CD8-positive, alpha-beta T cell (primary cell): ENCODE measurements at regions of chr7 and their contacts with region 1.

Region 1: DNA sequence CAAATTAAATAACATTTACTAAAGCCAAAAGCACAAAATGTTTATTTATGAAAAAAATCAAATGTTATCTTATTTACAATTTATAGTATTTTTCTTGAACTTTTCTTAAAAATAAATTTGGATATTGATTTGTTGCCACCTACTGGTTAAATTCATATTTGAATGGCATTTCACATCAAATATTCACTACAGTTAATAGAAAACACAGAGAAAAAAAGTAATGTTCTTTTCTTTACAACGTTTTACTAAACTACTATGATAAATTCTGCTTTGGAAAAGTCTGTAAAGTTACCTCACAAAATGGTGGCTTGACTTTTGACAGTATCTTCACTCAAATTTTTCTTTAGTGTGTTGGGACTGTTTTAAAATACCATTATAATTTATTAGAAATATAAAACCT is 52.7 kb downstream of the SRPK2 start:
- DNase-seq: peak in 1 of 9 experiments; percentile 34
- ATAC-seq: no peak
- H3K4me3 ChIP-seq: no peak overlapping the region
- H3K4me3 Mint-ChIP-seq: no peak overlapping the region
- H3K27ac ChIP-seq: no peak overlapping the region
- H3K27ac Mint-ChIP-seq: no peak overlapping the region
- H3K4me1 ChIP-seq: no peaks in the 10 kb centered on the region
- H3K4me1 Mint-ChIP-seq: peaks cover 26% of the 10 kb centered on the region
- H3K27me3 ChIP-seq: no peaks in the 10 kb centered on the region
- H3K27me3 Mint-ChIP-seq: no peaks in the 10 kb centered on the region
- CTCF ChIP-seq: peak; percentile 84

Region 2: GRCh38 chr7:105060437-105060836 is 275.6 kb before region 1 on chr7:
- CTCF ChIA-PET with region 1: no interaction called
- POLR2A ChIA-PET with region 1: no interaction called
- intact Hi-C with region 1: loop called in 1 of 2 experiments (anchors 1 kb)
- DNase-seq: no peak
- ATAC-seq: no peak
- H3K4me3 ChIP-seq: no peak overlapping the region
- H3K4me3 Mint-ChIP-seq: no peak overlapping the region
- H3K27ac ChIP-seq: no peak overlapping the region
- H3K27ac Mint-ChIP-seq: peak overlapping the region; percentile 58
- H3K4me1 ChIP-seq: peaks cover 40% of the 10 kb centered on the region
- H3K4me1 Mint-ChIP-seq: peaks cover 75% of the 10 kb centered on the region
- H3K27me3 ChIP-seq: no peaks in the 10 kb centered on the region
- H3K27me3 Mint-ChIP-seq: no peaks in the 10 kb centered on the region
- CTCF ChIP-seq: no peak

Region 3: DNA sequence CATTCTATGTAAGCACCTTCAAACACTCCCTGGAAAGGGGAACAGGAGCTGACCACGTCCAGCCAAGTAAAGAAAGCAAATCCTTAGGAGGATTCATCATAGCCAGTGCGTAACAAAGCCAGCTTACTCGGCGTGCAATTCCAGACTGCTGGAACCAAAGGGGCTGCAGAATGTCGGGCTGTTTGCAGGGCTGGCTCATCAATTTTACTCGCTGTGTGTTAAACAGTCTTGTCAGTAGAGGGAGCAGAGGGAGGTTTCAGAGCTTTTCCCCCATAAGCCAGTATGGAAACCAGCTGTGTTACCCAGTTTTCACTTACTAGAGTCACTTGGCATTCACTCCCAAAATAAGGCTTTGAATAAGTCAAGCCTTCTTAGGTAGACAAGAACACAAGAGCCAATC is 194.9 kb before region 1 on chr7:
- CTCF ChIA-PET with region 1: no interaction called
- POLR2A ChIA-PET with region 1: no interaction called
- intact Hi-C with region 1: loop called in 1 of 2 experiments (anchors 5 kb)
- DNase-seq: peak in 2 of 9 experiments; percentile 13 to 23
- ATAC-seq: no peak
- H3K4me3 ChIP-seq: no peak overlapping the region
- H3K4me3 Mint-ChIP-seq: no peak overlapping the region
- H3K27ac ChIP-seq: no peak overlapping the region
- H3K27ac Mint-ChIP-seq: no peak overlapping the region
- H3K4me1 ChIP-seq: no peaks in the 10 kb centered on the region
- H3K4me1 Mint-ChIP-seq: peaks cover 12% of the 10 kb centered on the region
- H3K27me3 ChIP-seq: no peaks in the 10 kb centered on the region
- H3K27me3 Mint-ChIP-seq: no peaks in the 10 kb centered on the region
- CTCF ChIP-seq: no peak

Region 4: DNA sequence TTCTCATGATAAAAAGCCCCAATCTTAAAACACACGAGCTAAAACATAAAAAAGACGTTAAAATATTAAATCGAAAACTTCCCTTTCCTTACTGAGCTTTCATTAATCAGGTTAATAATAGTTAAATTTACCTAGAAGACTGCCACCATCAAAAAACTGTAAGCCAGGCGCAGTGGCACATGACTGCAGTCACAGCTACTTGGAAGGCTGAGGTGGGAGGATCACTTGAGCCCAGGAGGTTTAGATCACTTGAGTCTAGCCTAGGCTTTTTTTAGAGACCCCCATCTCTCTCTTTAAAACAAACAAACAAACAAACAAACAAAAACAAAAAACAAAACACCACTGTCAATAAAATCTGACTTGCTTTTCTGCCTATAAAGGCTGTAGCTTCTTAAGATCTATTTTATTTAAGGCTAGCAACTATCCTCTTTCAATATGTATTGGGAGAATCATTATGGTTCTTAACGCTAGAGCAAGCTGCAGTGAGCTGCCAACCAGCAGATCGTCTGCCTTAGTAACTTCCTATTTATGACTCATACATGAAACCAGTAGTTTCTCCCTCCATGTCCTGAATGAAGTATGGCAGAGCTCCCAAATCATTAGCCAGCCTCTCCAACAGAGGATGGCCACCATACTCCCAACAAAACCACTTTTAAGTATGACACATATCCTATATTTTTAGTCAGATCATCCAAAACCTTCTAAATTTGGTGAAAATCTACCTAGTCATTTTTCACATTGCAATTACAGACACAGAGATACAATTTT is 110.9 kb before region 1 on chr7:
- CTCF ChIA-PET with region 1: interaction called, 3 read pairs
- POLR2A ChIA-PET with region 1: no interaction called
- intact Hi-C with region 1: loop called in 1 of 2 experiments (anchors 5 kb)
- DNase-seq: peak in 2 of 9 experiments; percentile 15 to 32
- ATAC-seq: peak; percentile 46
- H3K4me3 ChIP-seq: no peak overlapping the region
- H3K4me3 Mint-ChIP-seq: no peak overlapping the region
- H3K27ac ChIP-seq: no peak overlapping the region
- H3K27ac Mint-ChIP-seq: no peak overlapping the region
- H3K4me1 ChIP-seq: peaks cover 8% of the 10 kb centered on the region
- H3K4me1 Mint-ChIP-seq: peaks cover 34% of the 10 kb centered on the region
- H3K27me3 ChIP-seq: no peaks in the 10 kb centered on the region
- H3K27me3 Mint-ChIP-seq: no peaks in the 10 kb centered on the region
- CTCF ChIP-seq: no peak

Region 5: DNA sequence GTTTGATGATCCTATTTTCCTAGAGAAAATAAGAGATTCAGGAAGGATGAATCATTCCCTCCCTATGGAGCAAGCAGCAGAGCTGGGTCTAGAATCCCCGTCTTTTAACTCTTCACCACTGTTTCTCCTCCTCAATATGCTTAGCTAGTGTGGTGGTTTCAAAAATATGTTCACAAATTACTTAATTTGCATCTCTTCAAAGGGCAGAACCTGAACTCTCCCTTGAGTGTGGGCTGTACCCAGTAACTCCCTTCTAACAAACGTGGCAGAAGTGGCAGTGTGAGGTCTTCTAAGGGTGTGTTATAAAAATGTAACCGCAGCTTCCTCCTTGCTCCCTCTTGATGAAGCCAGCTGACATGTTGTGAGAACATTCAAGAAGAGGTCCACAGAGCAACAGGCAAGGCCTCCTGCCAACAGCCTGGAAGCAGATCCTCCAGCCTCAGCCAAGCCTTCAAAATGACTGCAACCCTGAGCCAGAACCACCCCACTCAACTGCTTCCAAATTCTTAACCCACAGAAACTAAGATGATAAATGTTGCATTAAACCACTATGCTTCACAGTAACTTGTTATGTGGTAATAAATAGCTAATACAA is 16.1 kb after region 1 on chr7:
- CTCF ChIA-PET with region 1: interaction called, 6 read pairs
- POLR2A ChIA-PET with region 1: no interaction called
- intact Hi-C with region 1: loop called in 1 of 2 experiments (anchors 2 kb)
- DNase-seq: peak; percentile 27 to 91 (median 56)
- ATAC-seq: peak; percentile 94
- H3K4me3 ChIP-seq: peak overlapping the region in 1 of 2 experiments; percentile 16
- H3K4me3 Mint-ChIP-seq: peak overlapping the region; percentile 63
- H3K27ac ChIP-seq: peak overlapping the region in 1 of 2 experiments; percentile 68
- H3K27ac Mint-ChIP-seq: peak overlapping the region; percentile 89
- H3K4me1 ChIP-seq: peaks cover 59% of the 10 kb centered on the region
- H3K4me1 Mint-ChIP-seq: peaks cover 66% of the 10 kb centered on the region
- H3K27me3 ChIP-seq: no peaks in the 10 kb centered on the region
- H3K27me3 Mint-ChIP-seq: no peaks in the 10 kb centered on the region
- CTCF ChIP-seq: no peak

Region 6: DNA sequence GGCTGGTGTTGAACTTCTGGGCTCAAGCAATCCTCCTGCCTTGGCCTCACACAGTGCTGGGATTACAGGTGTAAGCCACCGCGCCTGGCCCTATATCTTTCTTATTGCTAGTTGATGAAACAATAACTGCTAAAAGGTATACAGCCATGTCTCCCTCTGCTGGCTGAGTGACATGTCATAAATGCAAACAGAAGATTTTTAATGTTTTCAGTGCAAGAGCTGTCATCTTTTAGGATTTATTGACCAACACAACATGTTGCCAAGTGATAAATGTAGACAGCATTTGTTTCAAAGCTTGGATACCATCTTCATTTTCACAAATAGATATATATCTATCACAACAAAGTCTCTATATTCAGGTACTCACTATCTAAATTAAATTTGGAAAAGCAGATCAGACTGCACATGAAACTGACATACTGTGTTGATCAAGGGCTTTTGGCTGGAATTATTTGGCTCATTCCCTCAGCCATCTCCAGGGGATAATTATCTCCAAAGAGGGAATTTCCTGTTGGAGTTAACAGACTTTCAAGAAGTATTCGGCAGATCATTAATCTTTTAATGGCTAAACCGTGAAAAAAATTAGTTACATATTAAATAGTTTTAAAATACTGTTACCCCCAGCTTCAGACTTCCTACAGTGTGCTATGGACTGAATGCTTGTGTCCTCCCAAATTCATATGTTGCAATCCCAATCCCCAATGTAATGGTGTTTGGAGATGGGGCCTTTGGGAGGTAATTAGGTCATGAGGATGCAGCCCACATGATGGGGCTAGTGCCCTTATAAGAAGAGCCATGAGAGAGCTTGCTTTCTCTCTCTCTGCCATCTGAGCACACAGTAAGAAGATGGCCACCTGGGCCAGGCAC is 94.0 kb after region 1 on chr7:
- CTCF ChIA-PET with region 1: interaction called, 3 read pairs
- POLR2A ChIA-PET with region 1: no interaction called
- intact Hi-C with region 1: loop called in 1 of 2 experiments (anchors 2 kb)
- DNase-seq: peak; percentile 12 to 75 (median 53)
- ATAC-seq: peak; percentile 61
- H3K4me3 ChIP-seq: no peak overlapping the region
- H3K4me3 Mint-ChIP-seq: no peak overlapping the region
- H3K27ac ChIP-seq: no peak overlapping the region
- H3K27ac Mint-ChIP-seq: no peak overlapping the region
- H3K4me1 ChIP-seq: no peaks in the 10 kb centered on the region
- H3K4me1 Mint-ChIP-seq: no peaks in the 10 kb centered on the region
- H3K27me3 ChIP-seq: no peaks in the 10 kb centered on the region
- H3K27me3 Mint-ChIP-seq: no peaks in the 10 kb centered on the region
- CTCF ChIP-seq: peak; percentile 45

Region 7: GRCh38 chr7:105538339-105538738 is 202.3 kb after region 1 on chr7:
- CTCF ChIA-PET with region 1: no interaction called
- POLR2A ChIA-PET with region 1: no interaction called
- intact Hi-C with region 1: no loop called
- DNase-seq: no peak
- ATAC-seq: no peak
- H3K4me3 ChIP-seq: no peak overlapping the region
- H3K4me3 Mint-ChIP-seq: no peak overlapping the region
- H3K27ac ChIP-seq: no peak overlapping the region
- H3K27ac Mint-ChIP-seq: no peak overlapping the region
- H3K4me1 ChIP-seq: peaks cover 7% of the 10 kb centered on the region
- H3K4me1 Mint-ChIP-seq: peaks cover 33% of the 10 kb centered on the region
- H3K27me3 ChIP-seq: no peaks in the 10 kb centered on the region
- H3K27me3 Mint-ChIP-seq: no peaks in the 10 kb centered on the region
- CTCF ChIP-seq: no peak